K562 (cell line): ENCODE measurements at regions of chr9 and their contacts with region 1.

Region 1: GRCh38 chr9:98056269-98057137 is at the start of gene NANS:
- DNase-seq: peak; percentile 94 to 98 (median 98)
- ATAC-seq: peak; percentile 95
- H3K4me3 ChIP-seq: peak within 1 kb of the TSS; percentile 83
- H3K27ac ChIP-seq: peak within 1 kb of the TSS; percentile 90
- H3K4me1 ChIP-seq: peaks cover 18% of the 10 kb centered on the region in 2 experiments; a peak in 4 of 5 replicates
- H3K27me3 ChIP-seq: no peaks in the 10 kb centered on the region
- CTCF ChIP-seq: peak in 2 of 3 experiments; percentile 12 to 38; a peak in 2 of 6 replicates
- EP300 ChIP-seq: no peak
- POLR2A ChIP-seq: peak; percentile 95
- RAD21 ChIP-seq: no peak
- polyA plus RNA-seq, gene NANS: 37.1 to 64.3 TPM

Region 2: DNA sequence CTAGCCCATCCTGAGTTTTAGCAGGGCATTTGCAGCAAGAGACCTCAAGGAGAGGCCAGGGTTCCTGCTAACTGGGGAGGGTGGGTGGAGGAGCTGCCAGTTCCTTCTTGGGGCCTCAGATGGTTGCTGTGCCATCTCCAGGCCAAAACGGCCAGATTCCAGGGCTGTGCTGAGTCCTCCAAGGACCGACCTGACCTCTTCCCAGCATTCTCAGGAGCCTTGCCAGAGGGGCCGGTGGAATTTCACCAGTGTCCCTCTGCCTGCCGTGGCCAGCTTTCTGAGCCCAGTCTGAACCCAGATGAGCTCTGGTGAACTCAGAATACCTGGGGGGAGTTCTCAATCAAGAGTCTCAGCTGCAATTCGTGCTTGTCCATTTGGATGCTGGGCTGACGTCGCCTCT is 477.6 kb before region 1 on chr9:
- CTCF ChIA-PET with region 1: no interaction called
- POLR2A ChIA-PET with region 1: no interaction called
- in situ Hi-C with region 1: no loop called
- intact Hi-C with region 1: no loop called
- DNase-seq: no peak
- ATAC-seq: peak; percentile 25; the same call in 1 of the 3 replicates
- H3K4me3 ChIP-seq: no peak overlapping the region
- H3K27ac ChIP-seq: no peak overlapping the region
- H3K4me1 ChIP-seq: no peaks in the 10 kb centered on the region
- H3K27me3 ChIP-seq: no peaks in the 10 kb centered on the region
- CTCF ChIP-seq: no peak
- EP300 ChIP-seq: no peak
- POLR2A ChIP-seq: no peak
- RAD21 ChIP-seq: no peak

Region 3: DNA sequence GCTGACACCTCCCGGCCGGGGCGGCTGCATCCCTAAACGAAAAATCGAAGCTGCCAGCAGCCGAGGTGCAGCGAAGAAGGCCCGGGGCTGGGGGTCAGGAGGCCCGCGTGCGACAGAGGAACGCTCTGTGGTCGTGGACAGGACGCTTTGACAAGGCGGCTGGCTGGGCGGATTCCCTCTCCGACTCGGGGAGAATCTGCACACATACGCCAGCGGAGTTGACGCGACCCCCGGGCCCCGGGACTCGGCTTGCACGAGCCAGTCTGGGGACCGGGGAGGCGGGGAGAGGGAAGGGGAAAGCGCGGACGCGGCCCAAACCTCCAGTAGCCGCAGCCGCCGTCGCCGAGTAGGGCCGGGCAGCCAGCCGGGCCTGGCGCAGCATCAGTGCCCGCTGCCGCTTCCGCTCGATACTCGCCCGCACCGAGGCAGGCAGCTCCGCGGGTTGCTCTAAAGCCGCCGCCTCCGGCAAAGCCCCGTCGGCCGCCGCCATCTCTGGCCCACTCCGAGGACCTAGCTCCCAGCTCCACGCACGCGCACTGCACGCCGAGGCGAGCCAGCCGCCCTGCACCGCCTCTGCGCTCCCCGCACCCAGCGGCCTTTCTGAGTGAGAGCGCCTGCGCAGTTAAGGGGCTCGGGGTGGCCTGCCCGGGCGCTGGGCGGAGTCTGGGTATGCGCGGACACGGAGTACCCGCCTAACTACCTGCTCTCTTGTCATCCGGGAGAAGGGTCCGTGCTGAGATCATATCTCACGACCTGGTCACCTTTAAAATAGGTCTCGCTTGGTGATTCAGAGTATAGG is 359.5 kb before region 1 on chr9 and contains the start of gene XPA:
- CTCF ChIA-PET with region 1: no interaction called
- POLR2A ChIA-PET with region 1: no interaction called
- in situ Hi-C with region 1: no loop called
- intact Hi-C with region 1: loop called (anchors 10 kb)
- DNase-seq: peak; percentile 98 to 99 (median 99)
- ATAC-seq: peak; percentile 97
- H3K4me3 ChIP-seq: peak within 1 kb of the TSS; percentile 59
- H3K27ac ChIP-seq: peak within 1 kb of the TSS; percentile 64
- H3K4me1 ChIP-seq: peaks cover 16 to 21% of the 10 kb centered on the region in 2 experiments; a peak in 4 of 5 replicates
- H3K27me3 ChIP-seq: no peaks in the 10 kb centered on the region
- CTCF ChIP-seq: no peak
- EP300 ChIP-seq: no peak
- POLR2A ChIP-seq: peak; percentile 90
- RAD21 ChIP-seq: no peak
- polyA plus RNA-seq, gene XPA: 5.1 to 5.5 TPM

Region 4: DNA sequence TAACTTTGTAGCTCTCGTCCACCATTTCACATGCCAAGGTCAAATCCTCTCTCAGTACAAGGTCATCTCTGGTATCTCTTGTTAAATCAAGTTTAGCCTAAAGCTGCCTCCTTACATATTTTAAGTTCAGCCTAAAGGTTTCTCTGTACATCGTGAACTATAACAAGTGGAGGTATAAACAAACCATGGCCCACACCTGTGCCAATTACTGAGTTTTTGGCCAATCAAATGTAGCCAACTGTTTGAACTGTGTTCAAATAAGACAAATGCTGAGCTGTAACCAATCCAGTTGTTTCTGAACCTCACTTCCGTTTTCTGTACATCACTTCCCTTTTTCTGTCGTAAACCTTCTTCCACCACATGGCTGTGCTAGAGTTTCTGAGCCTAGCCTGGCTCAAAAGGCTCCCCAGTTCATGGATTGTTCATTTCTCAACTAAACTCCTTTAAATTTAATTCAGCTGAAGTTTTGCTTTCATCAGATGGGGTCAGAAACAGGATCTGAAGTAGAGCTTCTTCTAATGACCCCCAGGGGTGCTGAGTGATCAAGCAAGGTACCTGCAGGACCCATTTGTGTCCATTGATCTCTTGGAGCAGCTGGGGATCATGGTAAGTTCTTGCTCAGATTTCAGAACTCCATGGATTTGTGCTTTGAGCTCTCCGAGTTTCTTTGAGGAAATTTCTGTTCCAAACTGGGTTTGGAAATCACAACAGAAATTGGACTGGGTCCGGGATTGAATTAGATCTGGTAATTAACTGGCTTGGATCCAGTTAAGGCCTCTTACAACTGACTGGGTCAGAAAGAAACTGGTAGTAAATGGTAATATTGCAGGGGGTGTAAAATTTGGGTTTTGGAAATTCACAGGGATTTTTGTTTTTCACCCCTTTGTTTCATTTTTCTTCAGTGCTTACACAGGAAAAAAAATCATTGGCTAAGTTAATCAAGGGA is 11.0 kb before region 1 on chr9:
- CTCF ChIA-PET with region 1: no interaction called
- POLR2A ChIA-PET with region 1: interaction called, 57 read pairs
- in situ Hi-C with region 1: no loop called
- intact Hi-C with region 1: no loop called
- DNase-seq: peak; percentile 50 to 90 (median 52)
- ATAC-seq: peak; percentile 87
- H3K4me3 ChIP-seq: peak overlapping the region; percentile 55
- H3K27ac ChIP-seq: peak overlapping the region; percentile 90
- H3K4me1 ChIP-seq: peaks cover 12 to 19% of the 10 kb centered on the region in 2 experiments; a peak in 3 of 5 replicates
- H3K27me3 ChIP-seq: no peaks in the 10 kb centered on the region
- CTCF ChIP-seq: peak; percentile 3 to 30 (median 23); a peak in 1 of 6 replicates
- EP300 ChIP-seq: no peak
- POLR2A ChIP-seq: peak; percentile 96
- RAD21 ChIP-seq: no peak

Region 5: DNA sequence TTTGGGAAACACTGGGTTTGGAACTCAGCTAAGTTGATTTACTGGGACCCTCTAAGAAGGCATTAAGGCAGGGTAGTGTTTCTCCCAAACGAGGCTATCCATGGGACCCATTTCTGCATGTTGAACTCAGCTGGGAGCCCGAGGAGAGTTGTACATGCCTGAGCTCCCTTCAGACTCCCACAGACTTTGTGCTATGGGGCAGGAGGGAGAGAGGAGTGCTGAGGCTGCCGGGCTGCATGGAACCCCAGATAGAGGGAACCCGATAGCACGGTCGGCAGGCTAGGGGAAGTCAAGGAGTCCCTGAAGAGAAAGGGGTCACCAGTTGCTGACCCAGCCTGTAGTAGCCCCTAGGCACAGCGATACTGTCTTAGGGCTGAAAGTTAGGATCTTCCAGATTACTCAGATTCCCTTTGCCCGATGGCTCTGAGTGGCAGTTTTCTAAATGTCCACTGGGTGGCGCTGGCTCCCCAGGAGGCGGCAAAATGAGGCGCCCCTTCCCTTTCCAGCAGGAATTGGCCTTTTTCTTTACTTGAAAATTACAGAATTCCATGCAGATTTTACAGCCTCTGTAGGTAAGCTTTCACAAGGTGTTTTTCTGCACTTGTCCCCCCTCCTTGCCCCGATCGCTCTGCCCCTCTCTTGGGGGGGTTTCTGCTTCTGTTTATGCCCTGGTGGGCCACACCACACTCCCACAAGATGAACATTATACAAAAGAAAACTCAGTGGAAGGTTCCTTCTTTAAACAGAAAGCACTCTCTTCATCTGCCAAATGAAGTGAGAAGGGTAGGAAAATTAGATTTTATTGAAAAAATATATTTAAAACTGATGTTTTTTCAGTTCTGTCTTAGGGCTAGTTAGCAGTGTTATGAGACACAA is 17.9 kb after region 1 on chr9:
- CTCF ChIA-PET with region 1: no interaction called
- POLR2A ChIA-PET with region 1: interaction called, 30 read pairs
- in situ Hi-C with region 1: no loop called
- intact Hi-C with region 1: no loop called
- DNase-seq: peak; percentile 62 to 78 (median 68)
- ATAC-seq: peak; percentile 84
- H3K4me3 ChIP-seq: no peak overlapping the region
- H3K27ac ChIP-seq: peak overlapping the region; percentile 4; the same call in 2 of the 3 replicates
- H3K4me1 ChIP-seq: peaks cover 4% of the 10 kb centered on the region in 2 experiments; a peak in 2 of 5 replicates
- H3K27me3 ChIP-seq: no peaks in the 10 kb centered on the region
- CTCF ChIP-seq: peak; percentile 89 to 97 (median 94)
- EP300 ChIP-seq: no peak
- POLR2A ChIP-seq: no peak
- RAD21 ChIP-seq: peak; percentile 78 to 79

Region 6: DNA sequence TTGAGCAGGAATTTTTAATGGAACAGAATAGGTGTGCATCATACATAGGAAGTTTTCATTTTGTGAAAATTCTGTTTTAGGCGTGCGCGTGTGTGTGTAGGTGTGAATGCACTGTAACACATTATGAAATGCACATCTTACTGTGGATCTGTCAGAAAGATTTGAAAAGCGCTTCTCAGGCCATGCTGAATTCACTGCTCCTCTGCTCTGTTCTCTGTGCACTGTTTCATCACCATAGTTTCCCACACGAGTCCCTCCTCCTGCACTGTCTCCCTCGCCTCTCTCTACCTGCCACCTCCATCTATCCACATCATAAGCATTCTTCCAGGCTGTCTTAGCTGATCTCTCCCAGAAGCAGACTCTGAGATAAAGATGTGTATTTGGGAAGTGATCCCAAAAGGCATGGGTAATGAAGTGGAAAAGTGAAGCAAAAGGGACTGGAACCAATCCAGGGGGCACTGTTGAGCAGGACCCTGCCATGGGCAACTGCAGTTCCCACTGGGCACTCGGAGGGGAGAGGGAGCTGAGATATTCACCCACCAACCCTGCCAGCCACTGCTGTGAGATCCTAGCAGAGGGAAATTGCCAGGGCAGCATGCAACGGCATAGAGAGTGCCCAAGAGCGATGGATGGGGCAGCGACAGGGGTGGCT is 586.3 kb after region 1 on chr9:
- CTCF ChIA-PET with region 1: no interaction called
- POLR2A ChIA-PET with region 1: no interaction called
- in situ Hi-C with region 1: no loop called
- intact Hi-C with region 1: no loop called
- DNase-seq: peak in 1 of 4 experiments; percentile 16
- ATAC-seq: peak; percentile 47; the same call in 2 of the 3 replicates
- H3K4me3 ChIP-seq: no peak overlapping the region
- H3K27ac ChIP-seq: no peak overlapping the region
- H3K4me1 ChIP-seq: peaks cover 0 to 13% of the 10 kb centered on the region in 2 experiments; a peak in 2 of 5 replicates
- H3K27me3 ChIP-seq: peaks cover 12 to 37% of the 10 kb centered on the region in 2 experiments
- CTCF ChIP-seq: peak; percentile 29 to 57 (median 31); a peak in 4 of 6 replicates
- EP300 ChIP-seq: no peak
- POLR2A ChIP-seq: no peak
- RAD21 ChIP-seq: no peak